ENCODE measurements at regions of chr10 and their contacts with region 1.

Region 1: GRCh38 chr10:87878664-87879459 is 15.4 kb downstream of the PTEN start:
- DNase-seq: no peak
- H3K4me3 ChIP-seq: no peak overlapping the region
- CTCF ChIP-seq: no peak

Region 2: DNA sequence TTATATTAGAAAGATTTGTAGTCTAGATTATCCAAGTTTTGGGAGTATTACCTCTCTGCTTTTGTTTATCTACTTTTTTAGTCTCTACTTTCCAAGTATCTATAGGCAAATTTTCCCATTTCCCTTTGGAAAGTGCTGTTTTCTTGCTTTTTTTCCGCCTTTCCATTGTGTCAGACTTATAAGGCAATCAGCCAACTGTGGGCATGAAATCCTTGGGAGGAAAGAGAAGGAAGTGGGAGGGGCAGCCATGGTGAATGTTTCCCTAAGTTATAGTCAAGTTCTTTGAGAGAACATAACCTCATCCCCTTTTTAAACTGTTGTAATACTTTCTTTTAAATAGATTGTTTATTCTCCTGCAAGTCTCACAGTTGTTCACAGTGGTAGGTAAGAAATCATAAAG is 37.1 kb after region 1 on chr10:
- in situ Hi-C with region 1: loop called (anchors 5 kb)
- DNase-seq: peak; percentile 20
- H3K4me3 ChIP-seq: no peak overlapping the region
- CTCF ChIP-seq: no peak

Region 3: GRCh38 chr10:88313878-88314277 is 435.0 kb after region 1 on chr10:
- in situ Hi-C with region 1: no loop called
- DNase-seq: no peak
- H3K4me3 ChIP-seq: no peak overlapping the region
- CTCF ChIP-seq: no peak

Measured in astrocyte of the cerebellum (primary cell).